Tibial artery (tissue), 4 donors: ENCODE measurements at regions of chr3 and their contacts with region 1.

Region 1: GRCh38 chr3:4584456-4585249 is 91.5 kb downstream of the ITPR1 start:
- DNase-seq: peak; percentile 34 to 74
- H3K4me3 ChIP-seq: peak overlapping the region; percentile 40 to 48
- H3K27ac ChIP-seq: peak overlapping the region; percentile 69 to 82
- H3K4me1 ChIP-seq: peaks cover 0 to 92% (median 53%) of the 10 kb centered on the region in 4 donors
- H3K27me3 ChIP-seq: no peaks in the 10 kb centered on the region
- CTCF ChIP-seq: peak in 1 of 2 experiments; percentile 33

Region 2: DNA sequence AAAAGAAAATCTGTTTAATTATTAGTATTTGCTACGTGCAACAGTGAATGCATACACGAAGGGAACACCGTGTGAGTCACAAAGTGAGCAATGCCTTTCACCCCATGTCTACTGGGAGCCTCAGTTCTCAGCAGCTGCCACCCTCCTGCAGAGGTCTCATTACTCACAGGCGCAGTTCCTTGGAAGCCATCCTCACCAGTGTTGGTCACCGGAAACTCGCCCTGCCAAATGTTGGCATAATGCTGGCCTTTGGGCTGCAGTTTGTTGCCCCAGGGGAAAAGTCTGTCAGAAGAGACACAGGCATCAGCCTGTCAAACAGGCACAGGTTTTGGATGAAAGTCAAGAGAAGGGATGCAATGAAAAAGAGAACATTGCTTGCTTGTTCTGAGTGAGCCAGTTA is 167.7 kb before region 1 on chr3:
- intact Hi-C with region 1: loop called (anchors 5 kb)
- DNase-seq: peak; percentile 78 to 97
- H3K4me3 ChIP-seq: no peak overlapping the region
- H3K27ac ChIP-seq: peak overlapping the region; percentile 80 to 82
- H3K4me1 ChIP-seq: peaks cover 0 to 30% (median 22%) of the 10 kb centered on the region in 4 donors
- H3K27me3 ChIP-seq: no peaks in the 10 kb centered on the region
- CTCF ChIP-seq: peak in 1 of 2 experiments; percentile 2

Region 3: GRCh38 chr3:4493014-4493940 is 91.4 kb before region 1 on chr3 and contains the start of gene ITPR1:
- intact Hi-C with region 1: loop called (anchors 2 kb)
- DNase-seq: peak; percentile 99 to 100
- H3K4me3 ChIP-seq: peak within 1 kb of the TSS; percentile 80 to 93
- H3K27ac ChIP-seq: peak within 1 kb of the TSS; percentile 93 to 96
- H3K4me1 ChIP-seq: peaks cover 0 to 48% (median 10%) of the 10 kb centered on the region in 4 donors
- H3K27me3 ChIP-seq: no peaks in the 10 kb centered on the region
- CTCF ChIP-seq: no peak

Region 4: DNA sequence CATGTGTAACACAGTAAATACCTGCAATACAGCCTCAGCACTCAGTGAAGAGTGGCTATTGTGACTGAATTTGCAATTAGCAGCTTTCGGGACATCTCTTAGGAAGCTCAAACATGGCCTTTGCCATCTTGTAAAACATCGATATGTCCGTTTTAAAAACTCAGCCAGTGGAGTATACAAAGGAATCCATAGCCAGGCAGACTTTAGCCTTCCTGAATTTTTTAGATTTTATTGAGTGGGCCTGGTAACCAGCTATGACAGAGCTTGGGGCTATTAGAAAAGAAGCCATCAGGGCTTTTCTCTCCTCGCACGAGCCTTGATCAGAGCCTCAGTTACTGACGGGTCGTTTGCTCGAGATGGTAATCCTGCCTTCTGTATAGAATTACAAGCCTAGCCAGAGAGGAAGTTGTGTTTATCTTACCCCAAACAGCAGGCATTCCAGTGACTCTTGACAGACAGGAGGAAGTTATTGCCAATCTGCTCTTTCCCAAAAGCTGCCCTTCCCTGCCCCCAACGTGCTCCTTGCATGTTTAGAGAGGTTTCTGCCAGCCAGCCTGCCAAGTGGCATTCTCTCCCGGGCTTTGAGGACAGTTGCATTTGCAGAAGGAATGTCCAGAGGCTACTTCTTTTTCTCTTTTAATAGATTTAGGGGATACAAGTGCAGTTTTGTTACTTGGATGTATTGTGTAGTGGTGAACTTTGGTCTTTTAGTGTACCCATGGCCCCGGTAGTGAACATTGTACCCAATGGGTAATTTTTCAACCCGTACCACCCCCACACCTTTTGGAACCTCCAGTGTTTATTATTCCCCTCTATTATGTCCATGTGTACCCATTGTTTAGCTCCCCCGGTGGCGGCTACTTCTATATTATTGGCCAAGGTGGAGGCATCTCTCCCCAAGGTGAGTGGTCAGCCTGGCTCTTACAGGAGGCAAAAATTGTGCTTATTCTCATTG is 50.9 kb before region 1 on chr3:
- intact Hi-C with region 1: loop called (anchors 5 kb)
- DNase-seq: peak; percentile 42 to 82
- H3K4me3 ChIP-seq: peak overlapping the region in 1 of 2 donors; percentile 26
- H3K27ac ChIP-seq: peak overlapping the region; percentile 52 to 70
- H3K4me1 ChIP-seq: peaks cover 0 to 85% (median 50%) of the 10 kb centered on the region in 4 donors
- H3K27me3 ChIP-seq: no peaks in the 10 kb centered on the region
- CTCF ChIP-seq: no peak